Activated T-helper 2 cell treated with anti-CD3 and anti-CD28 coated beads, Interferon-gamma antibody, Interleukin-2, Interleukin-4, amounts not matched to agents 10 μg/mL and 5 μg/mL and 100 μg/mL, durations not matched to agents 14 hours and 24 hours and 36 hours (primary cell): ENCODE measurements at regions of chr11 and their contacts with region 1.

Region 1: DNA sequence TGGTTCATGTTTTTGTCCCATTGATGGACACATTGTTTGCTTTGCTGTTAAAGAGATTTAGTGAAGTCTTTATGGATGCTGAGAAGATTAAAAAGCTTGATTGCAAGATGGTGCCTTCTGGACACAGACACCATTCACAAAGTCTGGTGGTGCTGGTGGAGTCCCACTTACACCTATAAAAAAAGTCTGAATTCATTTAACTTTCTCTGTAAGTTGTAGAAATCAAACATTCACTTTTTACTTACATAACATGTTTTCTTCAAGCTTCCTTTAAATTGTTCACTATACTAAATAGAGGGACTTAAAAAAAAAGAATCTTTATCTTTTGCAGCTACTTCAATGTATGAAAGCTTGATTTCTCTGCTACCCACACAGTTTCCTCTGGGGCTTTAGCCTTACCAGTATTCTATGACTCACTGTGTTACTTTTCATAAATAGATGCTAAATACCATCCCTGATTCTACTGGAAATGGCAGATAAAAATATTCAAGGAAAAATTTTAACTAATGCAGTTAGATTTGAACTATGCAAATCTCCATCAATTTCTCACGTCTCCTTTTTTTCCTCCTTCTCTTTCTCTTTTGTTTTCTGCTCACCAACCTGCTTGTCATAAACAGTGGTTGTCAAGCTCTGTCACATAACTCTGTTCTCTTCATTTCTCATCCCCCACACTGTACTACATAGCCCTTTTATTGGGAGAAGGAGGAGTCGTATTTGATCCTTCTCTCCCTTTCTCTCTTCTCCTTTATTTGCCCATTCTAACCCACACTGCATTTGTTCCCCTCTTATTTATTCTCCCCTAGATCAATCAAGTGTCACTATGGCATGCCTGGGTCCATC is 89.7 kb downstream of the FAM76B start:
- DNase-seq: no peak
- H3K4me3 Mint-ChIP-seq: peak overlapping the region; percentile 62
- H3K27ac Mint-ChIP-seq: peak overlapping the region; percentile 93
- H3K4me1 Mint-ChIP-seq: peaks cover 54% of the 10 kb centered on the region
- H3K27me3 Mint-ChIP-seq: no peaks in the 10 kb centered on the region

Region 2: GRCh38 chr11:95337175-95337957 is 362.5 kb before region 1 on chr11:
- intact Hi-C with region 1: loop called (anchors 5 kb)
- DNase-seq: peak; percentile 46
- H3K4me3 Mint-ChIP-seq: no peak overlapping the region
- H3K27ac Mint-ChIP-seq: no peak overlapping the region
- H3K4me1 Mint-ChIP-seq: peaks cover 15% of the 10 kb centered on the region
- H3K27me3 Mint-ChIP-seq: peaks cover 2% of the 10 kb centered on the region

Region 3: GRCh38 chr11:95674657-95675358 is 25.0 kb before region 1 on chr11:
- intact Hi-C with region 1: loop called (anchors 1 kb)
- DNase-seq: no peak
- H3K4me3 Mint-ChIP-seq: no peak overlapping the region
- H3K27ac Mint-ChIP-seq: peak overlapping the region; percentile 78
- H3K4me1 Mint-ChIP-seq: peaks cover 54% of the 10 kb centered on the region
- H3K27me3 Mint-ChIP-seq: no peaks in the 10 kb centered on the region

Region 4: DNA sequence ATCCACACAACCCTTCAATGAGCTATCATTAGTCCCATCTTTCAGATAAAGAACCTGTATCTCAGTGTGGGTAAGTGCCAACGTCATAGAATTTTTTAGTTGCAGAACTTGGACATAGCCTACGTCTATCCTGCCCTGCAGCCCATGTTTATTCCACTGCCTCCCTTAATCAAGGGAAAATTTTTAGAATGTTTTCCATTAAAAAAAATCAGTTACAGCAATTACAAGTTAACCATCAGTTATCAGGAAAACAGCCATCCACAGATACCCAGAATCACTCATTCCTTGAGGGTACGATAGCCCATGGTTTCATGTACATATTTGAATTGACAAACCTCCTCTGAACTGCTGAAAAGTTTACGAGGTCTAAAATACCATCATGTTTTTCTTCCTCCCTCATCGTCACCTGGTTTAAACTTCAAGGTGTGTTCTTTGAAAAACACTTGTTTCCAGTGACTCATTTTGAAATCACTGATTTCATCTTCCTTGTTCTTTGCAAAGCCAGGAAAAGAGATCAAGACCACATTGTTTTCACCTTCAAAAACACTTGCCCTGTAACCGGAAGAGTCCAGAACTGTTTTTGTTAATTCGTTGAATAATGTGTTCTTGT is 11.2 kb before region 1 on chr11:
- intact Hi-C with region 1: loop called (anchors 1 kb)
- DNase-seq: no peak
- H3K4me3 Mint-ChIP-seq: peak overlapping the region; percentile 15
- H3K27ac Mint-ChIP-seq: no peak overlapping the region
- H3K4me1 Mint-ChIP-seq: peaks cover 21% of the 10 kb centered on the region
- H3K27me3 Mint-ChIP-seq: no peaks in the 10 kb centered on the region